AG04449 (cell line): ENCODE measurements at regions of chr11 and their contacts with region 1.

Region 1: GRCh38 chr11:95849087-95849825 is 59.0 kb downstream of the CEP57 start:
- DNase-seq: no peak
- H3K4me3 ChIP-seq: no peak overlapping the region
- CTCF ChIP-seq: peak; percentile 44

Region 2: GRCh38 chr11:95531116-95531515 is 318.1 kb before region 1 on chr11:
- CTCF ChIA-PET with region 1: no interaction called
- POLR2A ChIA-PET with region 1: no interaction called
- DNase-seq: no peak
- H3K4me3 ChIP-seq: no peak overlapping the region
- CTCF ChIP-seq: no peak

Region 3: GRCh38 chr11:95751515-95751914 is 97.7 kb before region 1 on chr11:
- CTCF ChIA-PET with region 1: no interaction called
- POLR2A ChIA-PET with region 1: no interaction called
- DNase-seq: no peak
- H3K4me3 ChIP-seq: no peak overlapping the region
- CTCF ChIP-seq: no peak

Region 4: DNA sequence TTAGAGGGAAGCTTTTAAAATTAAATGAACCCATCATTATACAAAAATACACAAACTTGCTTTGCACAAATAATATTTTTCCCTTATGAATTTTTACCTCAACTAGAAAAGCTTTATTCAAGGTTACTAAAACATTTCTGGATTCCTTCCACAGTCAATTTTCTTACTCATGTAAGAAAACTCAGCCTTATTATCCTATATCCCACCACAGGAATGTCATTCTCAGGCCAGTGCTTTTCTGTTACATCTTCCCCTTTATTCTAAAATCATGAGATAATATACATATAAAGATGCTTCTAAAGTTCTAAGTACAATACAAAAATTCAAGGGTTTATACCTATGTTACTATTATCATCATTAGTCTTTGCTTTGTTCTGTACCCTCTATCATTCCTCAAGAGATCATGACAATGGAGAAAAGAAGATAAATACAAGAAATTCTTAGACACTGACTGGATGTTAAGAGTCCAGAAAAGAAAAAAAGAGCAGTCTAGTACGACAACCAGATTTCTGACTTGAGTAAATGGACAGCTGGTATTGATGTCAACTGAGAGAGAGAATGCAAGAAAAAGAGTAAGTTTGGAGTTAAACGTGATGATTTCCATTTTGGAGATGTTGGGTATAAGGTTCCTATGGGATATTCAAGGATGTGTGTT is 14.4 kb after region 1 on chr11:
- CTCF ChIA-PET with region 1: interaction called, 12 read pairs
- POLR2A ChIA-PET with region 1: interaction called, 3 read pairs
- DNase-seq: peak; percentile 63
- H3K4me3 ChIP-seq: no peak overlapping the region
- CTCF ChIP-seq: no peak

Region 5: DNA sequence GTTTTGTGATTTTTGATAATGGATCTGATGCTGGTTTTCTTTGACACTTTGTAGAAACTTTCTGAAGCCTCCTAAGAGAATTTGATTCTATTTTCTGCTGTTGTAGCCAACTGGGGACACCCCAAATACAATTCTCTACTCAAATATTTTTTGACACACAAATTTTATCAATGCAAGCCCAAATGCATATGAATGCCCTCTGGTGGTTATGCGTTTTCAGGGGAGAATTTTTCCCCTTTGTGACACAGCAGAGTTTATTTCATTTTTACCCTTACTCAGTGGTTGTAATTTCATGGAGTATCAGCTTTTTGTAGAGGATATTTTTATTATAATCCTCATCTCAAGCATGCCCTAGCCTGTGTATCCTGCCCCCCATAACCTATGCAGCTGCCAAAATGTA is 119.3 kb after region 1 on chr11:
- CTCF ChIA-PET with region 1: interaction called, 12 read pairs
- POLR2A ChIA-PET with region 1: no interaction called
- DNase-seq: no peak
- H3K4me3 ChIP-seq: no peak overlapping the region
- CTCF ChIP-seq: peak; percentile 10

Region 6: DNA sequence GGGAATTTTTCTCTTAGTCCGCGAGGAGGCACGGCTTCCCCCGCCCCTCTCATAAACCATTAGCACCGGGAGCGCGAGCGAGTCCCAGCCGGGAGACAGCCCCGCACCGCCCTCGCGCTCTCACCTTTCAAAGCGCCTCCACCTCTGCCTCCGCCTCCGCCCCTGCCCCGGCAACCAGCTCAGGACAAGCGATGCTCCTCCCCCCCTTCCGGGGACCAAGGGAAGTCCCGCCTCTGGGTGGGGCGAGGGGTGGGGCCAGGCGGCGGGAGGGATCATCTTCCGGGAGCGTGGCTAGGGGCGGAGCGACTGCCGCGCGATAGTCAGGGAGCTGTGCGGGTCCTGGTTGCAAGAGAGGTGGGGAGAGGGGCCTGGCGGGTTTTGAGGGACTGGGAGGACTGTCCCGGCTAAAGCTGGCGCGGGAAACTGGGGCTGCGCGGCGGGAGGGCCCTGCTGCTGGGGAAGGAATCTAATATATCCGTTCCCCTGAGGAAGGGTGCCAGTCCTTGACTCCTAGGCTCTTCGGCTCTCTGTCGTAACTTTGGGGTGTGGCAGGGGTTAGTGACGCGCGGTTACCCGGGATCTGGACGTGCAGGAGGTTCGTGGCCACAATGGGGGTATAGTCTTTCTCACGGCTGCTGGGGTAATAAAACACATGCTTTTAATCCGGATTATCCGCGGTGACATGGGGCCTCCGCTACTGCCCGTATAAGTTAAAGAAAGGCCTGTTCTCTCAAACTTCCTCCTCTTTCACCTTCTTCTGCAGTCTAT is 540.6 kb after region 1 on chr11 and contains the starts of genes CCDC82 and JRKL:
- CTCF ChIA-PET with region 1: interaction called, 24 read pairs
- POLR2A ChIA-PET with region 1: no interaction called
- DNase-seq: peak; percentile 71
- H3K4me3 ChIP-seq: peak within 1 kb of the TSS; percentile 82
- CTCF ChIP-seq: no peak

Region 7: DNA sequence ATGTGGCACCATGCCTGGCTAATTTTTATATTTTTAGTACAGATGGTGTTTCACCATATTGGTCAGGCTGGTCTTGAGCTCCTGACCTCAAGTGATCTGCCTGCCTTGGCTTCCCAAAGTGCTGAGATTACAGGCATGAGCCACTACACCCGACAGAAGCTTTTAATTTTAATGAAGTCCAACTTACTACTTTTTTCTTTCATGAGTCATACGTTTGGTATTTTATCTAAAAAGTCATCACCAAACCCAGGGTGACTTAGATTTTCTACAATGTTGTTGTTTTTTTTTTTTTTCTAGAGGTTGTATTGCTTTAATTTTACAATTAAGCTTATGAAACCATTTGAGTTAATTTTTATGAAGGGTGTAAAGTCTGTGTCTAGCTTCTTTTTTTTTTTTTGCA is 575.4 kb after region 1 on chr11:
- CTCF ChIA-PET with region 1: interaction called, 10 read pairs
- POLR2A ChIA-PET with region 1: no interaction called
- DNase-seq: no peak
- H3K4me3 ChIP-seq: no peak overlapping the region
- CTCF ChIP-seq: no peak